ENCODE measurements at regions of chr10 and their contacts with region 1.

Region 1: DNA sequence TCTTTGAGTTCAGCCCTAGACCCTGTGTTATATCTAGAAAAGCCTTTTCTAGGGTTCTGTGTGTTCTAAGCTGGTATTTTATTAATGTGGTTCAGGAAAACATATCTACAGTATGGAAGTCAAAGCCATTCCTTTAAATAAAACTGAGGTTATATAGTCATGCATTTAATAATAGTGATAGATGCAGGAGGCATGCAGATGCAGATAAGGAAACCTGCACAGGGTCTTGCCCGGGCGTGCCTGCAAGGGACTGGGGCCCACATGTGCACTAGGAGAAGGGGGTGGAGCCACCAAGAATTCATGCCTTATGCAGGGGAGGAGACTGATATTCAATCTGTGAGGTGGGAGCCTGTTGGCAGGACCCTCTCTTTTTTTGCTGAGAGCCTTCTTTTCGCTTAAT is 171.5 kb downstream of the PRPF18 start:
- DNase-seq: no peak
- CTCF ChIP-seq: no peak

Region 2: DNA sequence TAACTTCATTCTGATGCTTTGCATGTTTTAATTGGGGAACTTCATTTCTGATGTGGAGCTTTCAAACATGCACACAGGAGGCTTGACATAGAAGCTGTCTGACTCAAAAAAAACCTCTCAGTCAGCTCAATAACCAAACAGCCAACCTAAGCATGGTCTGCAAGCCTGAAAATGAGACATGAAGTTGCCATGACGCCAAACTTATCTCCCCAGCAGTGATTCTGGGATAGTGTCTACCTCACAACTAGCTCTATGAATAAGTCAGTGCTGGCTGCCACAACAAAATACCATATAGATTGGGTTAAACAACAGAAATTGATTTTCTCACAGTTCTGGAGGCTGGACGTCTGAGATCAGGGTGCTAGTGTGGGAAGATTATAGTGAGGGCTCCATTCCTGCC is 1001.0 kb before region 1 on chr10:
- in situ Hi-C with region 1: no loop called
- DNase-seq: no peak
- CTCF ChIP-seq: no peak

Region 3: GRCh38 chr10:13701157-13701919 is 57.0 kb before region 1 on chr10:
- in situ Hi-C with region 1: loop called (anchors 5 kb)
- DNase-seq: no peak
- CTCF ChIP-seq: no peak

Measured in GM13976 (cell line).